Activated CD8-positive, alpha-beta T cell treated with anti-CD3 and anti-CD28 coated beads for 36 hours (primary cell): ENCODE measurements at regions of chr13 and their contacts with region 1.

Region 1: GRCh38 chr13:29210676-29211075 is 384.8 kb downstream of the SLC7A1 start:
- DNase-seq: no peak
- ATAC-seq: no peak
- H3K4me3 Mint-ChIP-seq: no peak overlapping the region
- H3K27ac Mint-ChIP-seq: no peak overlapping the region
- H3K4me1 Mint-ChIP-seq: no peaks in the 10 kb centered on the region
- H3K27me3 Mint-ChIP-seq: peaks cover 2% of the 10 kb centered on the region
- CTCF ChIP-seq: no peak

Region 2: DNA sequence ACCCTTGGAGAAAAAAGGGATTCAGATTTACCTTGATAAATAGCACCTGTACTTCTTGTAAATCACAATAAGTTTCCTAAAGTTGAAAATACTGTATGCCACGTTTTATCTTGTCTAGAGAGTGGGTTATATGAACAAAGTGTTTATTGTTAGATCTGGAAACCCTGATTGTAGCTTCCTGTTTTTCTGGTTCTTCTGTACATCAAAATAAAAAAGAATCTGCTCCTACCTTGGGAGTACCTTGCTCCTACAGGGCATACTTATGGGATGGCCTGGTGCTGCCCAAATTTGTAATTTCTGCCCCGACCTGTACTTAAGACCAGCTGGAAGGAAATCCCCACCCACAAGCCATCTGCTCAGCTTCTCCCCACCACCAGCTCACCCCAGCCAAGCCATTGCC is 143.7 kb after region 1 on chr13:
- CTCF ChIA-PET with region 1: no interaction called
- POLR2A ChIA-PET with region 1: no interaction called
- intact Hi-C with region 1: loop called (anchors 2 kb)
- DNase-seq: no peak
- ATAC-seq: no peak
- H3K4me3 Mint-ChIP-seq: no peak overlapping the region
- H3K27ac Mint-ChIP-seq: no peak overlapping the region
- H3K4me1 Mint-ChIP-seq: no peaks in the 10 kb centered on the region
- H3K27me3 Mint-ChIP-seq: peaks cover 5% of the 10 kb centered on the region
- CTCF ChIP-seq: no peak